ENCODE measurements at regions of chr10 and their contacts with region 1.

Region 1: DNA sequence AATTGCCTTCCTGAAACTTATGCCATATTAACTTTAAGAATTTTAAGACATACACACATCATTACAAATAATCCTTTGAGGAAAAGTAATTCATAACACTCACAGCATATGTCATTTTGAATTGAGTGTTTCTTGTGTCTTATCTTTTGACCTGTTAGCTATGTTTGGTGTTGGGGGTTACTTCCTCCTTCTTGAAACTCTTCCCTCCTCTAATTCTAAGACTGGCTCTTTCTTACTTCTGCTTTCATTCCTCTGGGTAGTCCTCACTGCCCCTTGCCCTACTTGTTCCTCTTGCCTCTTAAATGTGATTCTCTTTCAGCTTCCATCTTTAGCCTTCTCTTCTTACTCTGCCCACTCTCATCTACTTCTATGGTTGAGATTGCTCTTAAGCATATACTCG is 28.3 kb upstream of the PIP4K2A start:
- DNase-seq: no peak
- ATAC-seq: peak in 1 of 8 donors; percentile 45
- H3K4me3 ChIP-seq: no peak overlapping the region
- H3K27ac ChIP-seq: peak overlapping the region in 1 of 10 donors; percentile 62
- H3K4me1 ChIP-seq: peaks cover 0 to 23% (median 0%) of the 10 kb centered on the region in 9 donors
- H3K27me3 ChIP-seq: no peaks in the 10 kb centered on the region
- CTCF ChIP-seq: no peak

Region 2: GRCh38 chr10:22534849-22535604 is 207.7 kb before region 1 on chr10:
- intact Hi-C with region 1: no loop called
- DNase-seq: no peak
- ATAC-seq: peak in 4 of 8 donors; percentile 52 to 79 (median 74)
- H3K4me3 ChIP-seq: no peak overlapping the region
- H3K27ac ChIP-seq: peak overlapping the region in 4 of 10 donors; percentile 27 to 56 (median 34)
- H3K4me1 ChIP-seq: peaks cover 0 to 17% (median 8%) of the 10 kb centered on the region in 9 donors
- H3K27me3 ChIP-seq: no peaks in the 10 kb centered on the region
- CTCF ChIP-seq: no peak

Region 3: GRCh38 chr10:22723343-22723779 is 19.3 kb before region 1 on chr10:
- intact Hi-C with region 1: loop called in 1 of 10 experiments (anchors 2 kb)
- DNase-seq: no peak
- ATAC-seq: peak in 4 of 8 donors; percentile 30 to 67 (median 48)
- H3K4me3 ChIP-seq: no peak overlapping the region
- H3K27ac ChIP-seq: no peak overlapping the region
- H3K4me1 ChIP-seq: peaks cover 0 to 15% (median 0%) of the 10 kb centered on the region in 9 donors
- H3K27me3 ChIP-seq: peaks cover 0 to 4% (median 0%) of the 10 kb centered on the region in 7 donors
- CTCF ChIP-seq: no peak